Cardiac septum (tissue), 1 donor: ENCODE measurements at regions of chr2 and their contacts with region 1.

Region 1: GRCh38 chr2:239385096-239386000 is 15.5 kb downstream of the HDAC4 start:
- DNase-seq: no peak

Region 2: DNA sequence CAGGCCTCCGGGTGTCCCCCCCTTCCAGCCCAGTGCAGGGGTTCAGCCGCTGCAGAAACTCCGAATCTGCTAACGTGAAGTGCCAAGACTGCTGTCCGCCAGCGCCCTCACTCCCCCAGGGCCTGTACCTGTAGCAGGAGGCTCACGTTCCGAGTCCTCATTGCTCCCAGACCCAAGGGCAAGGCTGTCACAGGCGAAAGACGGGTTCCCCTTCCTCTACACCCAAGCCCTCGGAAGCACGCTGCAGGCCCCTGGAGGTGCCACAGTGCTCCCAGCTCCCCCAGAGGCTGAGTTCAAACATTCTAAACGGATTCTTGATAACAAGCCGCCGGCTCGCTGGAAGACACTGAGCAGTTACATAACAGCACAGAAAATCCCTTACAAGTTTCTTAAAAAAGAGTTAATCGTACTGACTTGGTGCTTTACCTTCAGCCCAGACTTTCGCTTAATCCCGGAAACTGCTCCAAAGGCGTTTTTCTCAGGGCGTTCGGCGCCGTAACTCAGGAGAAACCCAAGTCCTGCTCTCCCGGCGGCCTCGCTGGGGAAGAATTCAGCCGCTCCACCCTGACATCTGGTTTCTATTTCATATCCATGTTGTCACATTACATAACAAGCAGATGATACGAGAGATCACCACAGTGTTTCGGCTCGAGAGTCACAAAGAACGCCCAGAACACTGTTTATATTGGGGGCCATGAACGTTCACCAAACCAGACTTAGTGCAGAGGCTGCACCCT is 76.5 kb before region 1 on chr2:
- intact Hi-C with region 1: no loop called
- DNase-seq: peak; percentile 78

Region 3: GRCh38 chr2:239363946-239364630 is 21.3 kb before region 1 on chr2:
- intact Hi-C with region 1: loop called (anchors 2 kb)
- DNase-seq: peak; percentile 68